ENCODE measurements at regions of chr16 and their contacts with region 1.

Region 1: DNA sequence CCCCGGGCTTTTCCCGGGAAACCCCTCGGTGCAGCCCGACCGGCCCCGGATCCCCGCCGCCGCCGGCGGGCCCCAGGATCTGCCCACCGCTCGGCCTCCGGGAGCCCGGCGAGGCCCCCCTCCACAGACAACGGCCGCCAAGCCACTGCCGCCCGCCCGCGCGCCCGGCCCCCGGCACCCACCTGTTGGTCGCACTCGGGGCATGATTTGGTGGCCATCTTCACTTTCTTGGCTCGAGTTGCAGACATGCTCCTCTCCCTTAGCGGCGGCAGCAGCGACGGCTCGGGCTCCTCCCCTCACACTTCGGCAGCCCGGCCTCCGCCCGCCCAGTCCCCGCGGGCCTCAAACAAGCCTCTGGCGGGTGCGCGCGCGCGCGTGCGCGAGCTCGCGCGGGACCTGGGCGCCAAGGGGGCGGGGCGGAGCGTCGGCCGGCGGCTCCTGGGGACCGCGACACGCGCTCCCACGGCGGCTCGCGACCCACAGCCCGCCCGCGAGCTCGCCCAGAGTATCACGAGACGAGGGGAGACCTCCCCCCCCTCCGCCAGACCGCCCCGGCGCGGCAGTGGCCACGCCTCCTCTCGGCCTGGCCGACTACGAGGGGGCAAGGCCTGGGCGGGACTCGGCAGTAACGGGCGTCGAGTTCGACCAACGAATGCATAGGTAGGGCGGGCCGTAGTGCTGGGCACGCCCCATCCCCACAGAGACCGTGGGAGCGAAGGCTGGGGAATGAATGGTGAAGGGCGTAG is at the start of gene C16orf87:
- DNase-seq: peak; percentile 85 to 96 (median 90)
- ATAC-seq: peak; percentile 92
- H3K4me3 ChIP-seq: peak within 1 kb of the TSS; percentile 61 to 74
- H3K4me3 Mint-ChIP-seq: peak within 1 kb of the TSS; percentile 94
- H3K27ac ChIP-seq: peak within 1 kb of the TSS; percentile 62 to 73
- H3K27ac Mint-ChIP-seq: peak within 1 kb of the TSS; percentile 96
- H3K4me1 ChIP-seq: peaks cover 9% of the 10 kb centered on the region
- H3K4me1 Mint-ChIP-seq: peaks cover 27% of the 10 kb centered on the region
- H3K27me3 ChIP-seq: no peaks in the 10 kb centered on the region
- H3K27me3 Mint-ChIP-seq: no peaks in the 10 kb centered on the region
- CTCF ChIP-seq: no peak
- total RNA-seq, gene C16orf87: 13.9 to 14.0 TPM

Region 2: DNA sequence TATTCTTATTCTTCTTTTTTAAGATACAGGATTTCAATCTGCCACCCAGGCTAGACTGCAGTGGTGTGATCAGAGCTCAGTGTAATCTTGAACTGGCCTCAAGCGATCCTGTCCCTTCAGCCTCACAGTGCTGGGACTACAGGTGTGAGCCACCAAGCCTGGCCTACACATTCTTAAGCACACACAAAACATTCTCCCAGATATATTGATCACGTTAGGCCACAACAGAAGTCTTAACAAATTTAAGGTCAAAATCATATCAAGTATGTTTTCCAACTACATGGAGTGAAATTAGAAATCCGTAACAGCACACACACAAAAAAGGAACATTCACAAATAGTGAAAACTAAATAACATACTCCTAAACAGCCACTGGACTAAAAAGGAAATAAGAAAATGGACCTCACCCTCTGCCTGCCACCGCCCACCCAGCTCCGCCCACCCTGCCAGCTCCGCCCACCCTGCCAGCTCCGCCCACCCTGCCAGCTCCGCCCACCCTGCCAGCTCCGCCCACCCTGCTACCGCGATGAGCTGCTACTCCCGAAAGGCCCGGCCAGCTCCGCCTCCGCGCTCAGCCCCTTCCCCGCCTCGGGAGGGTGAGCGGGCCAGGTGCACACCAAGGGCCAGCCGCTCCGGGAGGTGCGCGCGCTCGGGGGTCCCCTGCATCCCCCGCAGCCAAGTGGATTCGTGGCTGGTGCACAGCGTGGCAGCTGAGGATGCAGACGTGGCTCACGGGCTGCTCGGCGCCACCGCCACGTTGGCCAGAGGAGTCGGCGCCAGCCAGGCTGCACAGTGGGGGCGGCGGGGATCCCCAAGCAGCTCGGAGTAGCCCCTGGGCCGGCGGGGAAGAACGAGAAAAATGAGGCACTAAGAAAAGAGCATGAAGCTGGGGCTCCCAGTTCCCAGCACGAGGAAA is 41.3 kb before region 1 on chr16:
- CTCF ChIA-PET with region 1: no interaction called
- POLR2A ChIA-PET with region 1: interaction called, 5 read pairs
- intact Hi-C with region 1: loop called (anchors 1 kb)
- DNase-seq: peak; percentile 66 to 86 (median 78)
- ATAC-seq: peak; percentile 98
- H3K4me3 ChIP-seq: peak overlapping the region; percentile 62 to 69
- H3K4me3 Mint-ChIP-seq: peak overlapping the region; percentile 74
- H3K27ac ChIP-seq: peak overlapping the region in 1 of 2 experiments; percentile 6
- H3K27ac Mint-ChIP-seq: peak overlapping the region; percentile 80
- H3K4me1 ChIP-seq: peaks cover 4% of the 10 kb centered on the region
- H3K4me1 Mint-ChIP-seq: peaks cover 18% of the 10 kb centered on the region
- H3K27me3 ChIP-seq: no peaks in the 10 kb centered on the region
- H3K27me3 Mint-ChIP-seq: no peaks in the 10 kb centered on the region
- CTCF ChIP-seq: no peak

Region 3: GRCh38 chr16:46883690-46884512 is 52.8 kb after region 1 on chr16 and contains the start of gene GPT2:
- CTCF ChIA-PET with region 1: no interaction called
- POLR2A ChIA-PET with region 1: interaction called, 3 read pairs
- intact Hi-C with region 1: loop called in 1 of 2 experiments (anchors 1 kb)
- DNase-seq: peak; percentile 27 to 77 (median 59)
- ATAC-seq: peak; percentile 91
- H3K4me3 ChIP-seq: peak within 1 kb of the TSS; percentile 59 to 70
- H3K4me3 Mint-ChIP-seq: peak within 1 kb of the TSS; percentile 92
- H3K27ac ChIP-seq: no peak within 1 kb of the TSS
- H3K27ac Mint-ChIP-seq: no peak within 1 kb of the TSS
- H3K4me1 ChIP-seq: no peaks in the 10 kb centered on the region
- H3K4me1 Mint-ChIP-seq: peaks cover 10% of the 10 kb centered on the region
- H3K27me3 ChIP-seq: no peaks in the 10 kb centered on the region
- H3K27me3 Mint-ChIP-seq: peaks cover 29% of the 10 kb centered on the region
- CTCF ChIP-seq: no peak
- total RNA-seq, gene GPT2: 0.08 TPM in 1 of 2 experiments, not detected in the other

Region 4: DNA sequence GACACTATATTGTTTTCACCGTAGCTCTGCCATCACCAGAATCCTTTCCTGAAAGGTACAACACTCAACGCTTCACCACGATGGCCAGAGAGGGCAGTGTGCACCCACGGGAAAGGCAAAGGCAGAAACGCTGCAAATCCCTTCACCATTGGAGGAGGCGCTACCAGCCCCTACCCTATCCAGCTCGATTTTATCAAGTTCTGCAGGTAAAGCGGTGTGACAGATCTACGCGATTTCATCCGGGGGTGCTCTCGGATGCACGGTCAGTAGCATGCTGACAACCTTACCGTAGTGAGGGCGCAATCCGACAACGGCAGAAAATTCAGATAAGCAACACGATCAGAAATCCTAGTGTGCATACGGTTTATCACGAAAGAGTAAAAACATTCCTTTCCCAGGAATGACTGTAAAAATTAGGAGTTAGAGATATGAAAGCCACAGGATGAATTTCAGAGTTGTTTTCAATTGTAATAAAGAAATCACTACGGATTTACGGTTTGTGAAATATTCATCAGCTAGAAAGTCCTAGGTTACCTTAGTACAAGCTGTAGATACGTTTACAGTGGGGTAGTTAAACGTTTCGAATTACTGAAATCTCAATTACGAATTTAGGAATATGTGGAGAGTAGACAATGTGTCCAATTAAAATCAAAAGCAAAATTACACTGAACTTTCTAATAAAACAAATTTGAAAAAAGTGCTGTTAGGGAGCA is 310.9 kb after region 1 on chr16:
- CTCF ChIA-PET with region 1: no interaction called
- POLR2A ChIA-PET with region 1: no interaction called
- intact Hi-C with region 1: loop called (anchors 2 to 10 kb)
- DNase-seq: peak; percentile 63 to 87 (median 80)
- ATAC-seq: peak; percentile 77
- H3K4me3 ChIP-seq: peak overlapping the region; percentile 3 to 28
- H3K4me3 Mint-ChIP-seq: peak overlapping the region; percentile 76
- H3K27ac ChIP-seq: no peak overlapping the region
- H3K27ac Mint-ChIP-seq: no peak overlapping the region
- H3K4me1 ChIP-seq: peaks cover 12% of the 10 kb centered on the region
- H3K4me1 Mint-ChIP-seq: peaks cover 21% of the 10 kb centered on the region
- H3K27me3 ChIP-seq: peaks cover 3 to 5% of the 10 kb centered on the region in 2 experiments
- H3K27me3 Mint-ChIP-seq: peaks cover 22% of the 10 kb centered on the region
- CTCF ChIP-seq: peak; percentile 85

Region 5: GRCh38 chr16:48244080-48244862 is 1413.2 kb after region 1 on chr16 and contains the start of gene LONP2:
- CTCF ChIA-PET with region 1: no interaction called
- POLR2A ChIA-PET with region 1: no interaction called
- intact Hi-C with region 1: loop called in 1 of 2 experiments (anchors 10 kb)
- DNase-seq: peak; percentile 82 to 93 (median 89)
- ATAC-seq: peak; percentile 94
- H3K4me3 ChIP-seq: peak within 1 kb of the TSS; percentile 66 to 88
- H3K4me3 Mint-ChIP-seq: peak within 1 kb of the TSS; percentile 90
- H3K27ac ChIP-seq: peak within 1 kb of the TSS; percentile 75 to 83
- H3K27ac Mint-ChIP-seq: peak within 1 kb of the TSS; percentile 95
- H3K4me1 ChIP-seq: peaks cover 38% of the 10 kb centered on the region
- H3K4me1 Mint-ChIP-seq: peaks cover 50% of the 10 kb centered on the region
- H3K27me3 ChIP-seq: no peaks in the 10 kb centered on the region
- H3K27me3 Mint-ChIP-seq: no peaks in the 10 kb centered on the region
- CTCF ChIP-seq: no peak
- total RNA-seq, gene LONP2: 71.8 to 72.1 TPM

Region 6: DNA sequence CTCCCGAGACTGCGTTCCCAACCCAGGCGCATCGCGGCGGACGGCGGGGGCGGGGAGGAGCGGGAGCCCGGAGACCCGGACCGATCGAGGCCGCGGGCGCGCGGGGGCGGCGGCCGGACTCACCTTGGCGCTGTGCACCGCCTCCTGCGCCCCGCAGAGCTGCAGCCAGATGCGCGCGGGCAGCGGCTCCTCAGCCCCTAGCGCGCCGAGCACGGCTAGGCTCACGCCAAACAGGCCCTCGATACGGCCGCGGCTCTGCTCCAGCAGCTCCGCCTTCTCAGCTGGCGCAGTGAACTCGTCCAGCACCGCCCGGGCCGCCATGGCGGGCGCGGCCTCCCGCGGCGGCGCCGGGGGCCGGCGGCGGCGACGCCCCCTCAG is 1778.6 kb after region 1 on chr16:
- CTCF ChIA-PET with region 1: no interaction called
- POLR2A ChIA-PET with region 1: no interaction called
- intact Hi-C with region 1: loop called in 1 of 2 experiments (anchors 2 kb)
- DNase-seq: no peak
- ATAC-seq: peak; percentile 17
- H3K4me3 ChIP-seq: peak overlapping the region; percentile 81 to 88
- H3K4me3 Mint-ChIP-seq: peak overlapping the region; percentile 86
- H3K27ac ChIP-seq: peak overlapping the region; percentile 72 to 87
- H3K27ac Mint-ChIP-seq: peak overlapping the region; percentile 94
- H3K4me1 ChIP-seq: peaks cover 79% of the 10 kb centered on the region
- H3K4me1 Mint-ChIP-seq: peaks cover 40% of the 10 kb centered on the region
- H3K27me3 ChIP-seq: no peaks in the 10 kb centered on the region
- H3K27me3 Mint-ChIP-seq: no peaks in the 10 kb centered on the region
- CTCF ChIP-seq: no peak